ENCODE measurements at regions of chr4 and their contacts with region 1.

Region 1: DNA sequence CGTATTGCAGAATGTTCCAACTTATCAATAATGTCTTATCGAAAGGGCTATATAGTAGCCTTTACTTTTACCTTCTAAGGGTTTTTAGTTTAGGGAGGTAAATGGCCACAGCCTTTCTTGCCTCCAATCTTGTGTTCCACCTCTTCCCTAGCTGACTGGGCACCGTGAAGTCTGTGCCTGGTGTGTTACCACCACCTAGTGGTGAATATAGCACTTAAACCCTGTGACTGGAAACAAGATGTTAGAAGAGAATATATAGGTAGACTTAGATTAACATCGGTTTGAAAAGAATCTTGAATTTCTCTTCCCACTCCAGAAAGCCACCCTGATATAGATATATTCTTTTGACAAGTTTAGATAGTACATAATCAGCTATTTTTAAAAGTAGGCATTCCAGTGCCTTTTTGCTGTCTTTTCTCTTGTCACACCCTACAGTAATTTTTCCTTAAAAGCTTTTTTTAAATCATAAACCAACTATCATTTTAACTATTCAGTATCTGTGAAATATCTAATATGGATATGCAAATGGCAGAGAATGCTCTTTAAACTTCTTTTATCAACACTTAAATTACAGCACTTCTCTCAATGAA is 27.8 kb upstream of the ADH7 start:
- DNase-seq: peak; percentile 66
- ATAC-seq: peak; percentile 51
- H3K4me3 Mint-ChIP-seq: no peak overlapping the region
- H3K27ac Mint-ChIP-seq: no peak overlapping the region
- H3K4me1 Mint-ChIP-seq: no peaks in the 10 kb centered on the region
- H3K27me3 Mint-ChIP-seq: peaks cover 37% of the 10 kb centered on the region

Region 2: DNA sequence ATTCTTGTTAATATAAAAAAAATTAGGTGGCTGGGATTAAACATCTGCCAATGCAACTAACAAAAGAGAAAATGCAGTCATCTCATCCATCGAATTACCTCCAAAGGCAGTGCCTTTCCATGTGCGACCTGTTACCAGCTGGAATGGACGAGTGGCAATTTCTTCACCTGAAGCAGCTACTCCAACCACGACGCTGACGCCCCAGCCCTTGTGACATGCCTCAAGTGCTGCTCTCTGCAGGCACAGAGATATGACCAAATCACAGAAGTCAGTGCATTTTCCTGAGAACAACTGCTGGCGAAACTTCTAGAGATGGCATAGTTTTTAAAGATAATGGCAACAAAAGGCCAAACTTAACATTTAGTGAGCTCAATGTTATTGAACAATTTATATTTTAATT is 388.2 kb before region 1 on chr4:
- CTCF ChIA-PET with region 1: no interaction called
- DNase-seq: no peak
- ATAC-seq: no peak
- H3K4me3 Mint-ChIP-seq: no peak overlapping the region
- H3K27ac Mint-ChIP-seq: no peak overlapping the region
- H3K4me1 Mint-ChIP-seq: no peaks in the 10 kb centered on the region
- H3K27me3 Mint-ChIP-seq: no peaks in the 10 kb centered on the region

Region 3: DNA sequence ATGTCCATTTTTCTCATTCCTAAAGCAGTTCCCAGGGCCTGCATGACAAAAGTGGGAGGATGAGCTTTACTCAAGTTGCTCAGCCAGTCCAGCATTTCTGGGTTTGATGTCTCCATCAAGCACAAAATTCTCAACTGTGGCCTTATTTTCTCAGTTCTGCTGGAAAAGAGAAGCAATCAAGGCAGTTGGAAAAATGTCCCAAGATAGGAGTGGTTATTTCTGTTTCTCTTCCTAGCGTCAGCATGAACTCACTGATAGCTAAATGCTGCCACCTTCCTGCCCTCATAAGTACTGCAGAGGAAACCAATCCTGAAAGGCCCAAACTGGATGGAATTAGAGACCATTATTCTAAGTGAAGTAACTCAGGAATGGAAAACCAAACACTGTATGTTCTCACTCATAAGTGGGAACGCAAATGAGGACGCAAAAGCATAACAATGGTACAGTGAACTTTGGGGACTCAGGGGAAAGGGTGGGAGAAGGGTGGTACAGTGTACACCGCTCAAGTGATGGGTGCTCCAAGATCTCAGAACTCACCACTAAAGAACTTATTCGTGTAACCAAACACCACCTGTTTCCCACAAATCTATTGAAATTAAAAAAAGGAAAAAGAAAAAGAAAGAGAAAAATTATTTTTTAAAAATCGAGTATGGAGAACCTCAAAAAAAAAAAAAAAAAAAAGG is 57.4 kb before region 1 on chr4:
- CTCF ChIA-PET with region 1: interaction called, 13 read pairs
- DNase-seq: peak; percentile 67
- ATAC-seq: peak; percentile 45
- H3K4me3 Mint-ChIP-seq: no peak overlapping the region
- H3K27ac Mint-ChIP-seq: no peak overlapping the region
- H3K4me1 Mint-ChIP-seq: peaks cover 22% of the 10 kb centered on the region
- H3K27me3 Mint-ChIP-seq: peaks cover 30% of the 10 kb centered on the region

Measured in activated CD8-positive, alpha-beta memory T cell treated with anti-CD3 and anti-CD28 coated beads, Interleukin-2, amount 10 ng/mL, durations not matched to agents 7 days and 5 days (primary cell).